Colonic mucosa (tissue), 4 donors: ENCODE measurements at regions of chr7 and their contacts with region 1.

Region 1: GRCh38 chr7:55515569-55516279 is 56.6 kb downstream of the VOPP1 start:
- DNase-seq: no peak
- H3K4me3 ChIP-seq: no peak overlapping the region
- H3K27ac ChIP-seq: no peak overlapping the region
- H3K4me1 ChIP-seq: no peaks in the 10 kb centered on the region
- H3K27me3 ChIP-seq: no peaks in the 10 kb centered on the region
- CTCF ChIP-seq: no peak

Region 2: DNA sequence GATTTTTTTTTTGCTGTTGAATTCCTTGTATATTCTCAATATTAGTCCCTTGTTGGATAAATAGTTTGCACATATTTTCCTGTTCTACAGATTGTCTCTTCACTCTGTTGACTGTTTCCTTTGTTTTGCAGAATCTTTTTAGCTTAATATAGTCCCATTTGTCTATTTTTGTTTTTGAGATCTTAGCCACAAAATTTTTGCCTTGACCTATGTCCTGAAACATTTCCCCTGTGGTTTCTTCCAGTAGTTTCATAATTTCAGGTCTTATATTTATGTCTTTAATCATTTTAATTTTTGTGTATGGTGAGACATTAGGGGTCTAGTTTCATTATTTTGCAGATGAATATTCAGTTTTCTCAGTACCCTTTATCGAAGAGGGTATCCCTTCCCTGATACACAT is 57.9 kb before region 1 on chr7:
- intact Hi-C with region 1: loop called (anchors 10 kb)
- DNase-seq: no peak
- H3K4me3 ChIP-seq: no peak overlapping the region
- H3K27ac ChIP-seq: no peak overlapping the region
- H3K4me1 ChIP-seq: no peaks in the 10 kb centered on the region
- H3K27me3 ChIP-seq: no peaks in the 10 kb centered on the region
- CTCF ChIP-seq: no peak